ENCODE measurements at regions of chr3 and their contacts with region 1.

Region 1: DNA sequence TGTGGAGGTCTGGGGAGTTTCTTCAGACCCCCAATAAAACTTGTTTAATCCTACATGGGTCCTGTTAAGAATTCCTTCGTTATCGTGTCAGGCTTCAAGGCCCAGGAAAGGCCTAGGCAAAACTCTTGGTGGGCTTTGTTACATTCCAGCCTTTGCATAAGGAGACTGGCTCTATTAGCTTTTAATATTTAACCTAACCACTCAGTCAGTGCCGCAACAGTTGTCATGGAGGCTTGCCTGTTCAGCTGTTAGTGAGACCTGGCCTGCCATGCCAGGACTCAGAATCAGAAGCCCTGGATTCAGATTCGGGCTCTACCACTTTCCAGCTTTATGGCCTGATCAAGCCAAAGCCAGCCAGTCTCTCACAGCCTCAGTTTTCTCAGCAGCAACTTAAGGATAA is 19.6 kb downstream of the EIF1B start:
- DNase-seq: no peak
- ATAC-seq: no peak
- H3K4me3 ChIP-seq: no peak overlapping the region
- H3K27ac ChIP-seq: no peak overlapping the region
- H3K4me1 ChIP-seq: peaks cover 0 to 10% (median 4%) of the 10 kb centered on the region in 12 donors
- H3K27me3 ChIP-seq: no peaks in the 10 kb centered on the region
- CTCF ChIP-seq: no peak
- POLR2A ChIP-seq: no peak

Region 2: GRCh38 chr3:40382617-40382979 is 53.5 kb after region 1 on chr3:
- intact Hi-C with region 1: no loop called
- DNase-seq: no peak
- ATAC-seq: no peak
- H3K4me3 ChIP-seq: no peak overlapping the region
- H3K27ac ChIP-seq: no peak overlapping the region
- H3K4me1 ChIP-seq: peaks cover 0 to 11% (median 2%) of the 10 kb centered on the region in 12 donors
- H3K27me3 ChIP-seq: peaks cover 0 to 9% (median 0%) of the 10 kb centered on the region in 9 donors
- CTCF ChIP-seq: no peak
- POLR2A ChIP-seq: no peak

Region 3: DNA sequence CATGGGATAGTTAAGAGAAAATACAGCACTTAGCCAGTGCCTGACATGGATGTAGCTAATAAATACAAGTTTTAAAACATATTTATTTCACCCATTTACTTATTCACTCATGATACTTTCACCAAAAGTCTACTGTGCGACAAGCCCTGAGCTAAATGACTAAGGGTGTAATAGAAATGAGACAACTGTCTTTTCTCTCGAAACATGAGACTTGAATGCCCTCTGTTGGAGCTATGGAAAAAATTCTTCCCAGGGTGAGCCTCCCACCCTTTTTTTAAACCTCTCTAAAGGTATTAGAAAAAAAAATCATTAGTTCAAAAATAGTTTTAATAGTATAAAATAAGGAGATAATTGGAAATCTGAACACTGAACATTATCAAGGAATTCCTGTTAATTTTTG is 103.7 kb after region 1 on chr3:
- intact Hi-C with region 1: loop called in 6 of 10 experiments (anchors 1 to 10 kb)
- DNase-seq: no peak
- ATAC-seq: no peak
- H3K4me3 ChIP-seq: no peak overlapping the region
- H3K27ac ChIP-seq: no peak overlapping the region
- H3K4me1 ChIP-seq: no peaks in the 10 kb centered on the region
- H3K27me3 ChIP-seq: no peaks in the 10 kb centered on the region
- CTCF ChIP-seq: peak in 3 of 12 donors; percentile 9 to 21 (median 18)
- POLR2A ChIP-seq: no peak

Region 4: DNA sequence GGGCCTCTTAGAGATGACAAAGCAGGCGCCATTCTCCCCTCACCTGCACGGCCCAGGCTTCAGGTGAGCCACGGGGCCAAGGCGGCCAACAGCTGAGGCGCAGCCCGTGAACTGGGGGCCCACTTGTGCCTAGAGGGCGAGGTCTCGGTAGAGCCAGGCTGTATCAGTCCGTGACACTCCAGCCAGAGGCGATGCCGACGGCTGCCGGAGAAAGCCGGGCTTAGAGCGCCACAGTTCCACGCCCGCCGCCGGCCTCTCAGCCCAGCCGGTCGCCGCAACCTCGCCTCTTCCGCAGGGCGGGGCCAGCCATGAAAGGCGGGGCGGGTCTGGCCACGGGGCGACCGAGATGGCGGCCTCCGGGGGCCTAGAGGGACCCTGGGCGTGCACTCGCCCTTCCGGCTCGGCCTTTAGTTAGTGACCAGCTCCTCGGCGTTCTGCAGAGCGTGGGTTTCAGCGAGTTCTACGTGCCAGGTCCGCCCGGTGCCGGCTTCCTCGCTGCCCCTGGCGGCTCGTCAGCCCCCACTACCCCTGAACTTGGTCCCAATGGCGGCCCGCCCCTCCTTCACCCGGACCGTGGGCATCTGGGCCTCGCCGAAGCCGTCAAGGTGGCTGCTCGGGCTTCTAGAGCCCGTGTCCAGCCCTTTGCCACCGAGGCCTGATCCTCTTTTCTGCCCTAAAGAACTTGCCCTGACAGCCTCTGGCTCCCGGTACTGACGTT is 195.7 kb after region 1 on chr3 and contains the start of gene ZNF621:
- intact Hi-C with region 1: loop called in 5 of 10 experiments (anchors 5 to 10 kb)
- DNase-seq: peak; percentile 93 to 96 (median 94)
- ATAC-seq: peak; percentile 96 to 100 (median 100)
- H3K4me3 ChIP-seq: peak within 1 kb of the TSS; percentile 54 to 95 (median 84)
- H3K27ac ChIP-seq: peak within 1 kb of the TSS; percentile 70 to 94 (median 86)
- H3K4me1 ChIP-seq: peaks cover 0 to 19% (median 13%) of the 10 kb centered on the region in 12 donors
- H3K27me3 ChIP-seq: no peaks in the 10 kb centered on the region
- CTCF ChIP-seq: peak in 1 of 12 donors; percentile 15
- POLR2A ChIP-seq: peak in 1 of 2 donors; percentile 87
- total RNA-seq, gene ZNF621: 7.6 to 14.3 (median 9.7) TPM

Region 5: GRCh38 chr3:41881233-41881821 is 1552.3 kb after region 1 on chr3:
- intact Hi-C with region 1: loop called (anchors 2 to 10 kb)
- DNase-seq: no peak
- ATAC-seq: no peak
- H3K4me3 ChIP-seq: no peak overlapping the region
- H3K27ac ChIP-seq: no peak overlapping the region
- H3K4me1 ChIP-seq: no peaks in the 10 kb centered on the region
- H3K27me3 ChIP-seq: no peaks in the 10 kb centered on the region
- CTCF ChIP-seq: peak; percentile 60 to 81 (median 73)
- POLR2A ChIP-seq: no peak

Measured in heart left ventricle (tissue), 16 donors.